ENCODE measurements at regions of chr3 and their contacts with region 1.

Region 1: DNA sequence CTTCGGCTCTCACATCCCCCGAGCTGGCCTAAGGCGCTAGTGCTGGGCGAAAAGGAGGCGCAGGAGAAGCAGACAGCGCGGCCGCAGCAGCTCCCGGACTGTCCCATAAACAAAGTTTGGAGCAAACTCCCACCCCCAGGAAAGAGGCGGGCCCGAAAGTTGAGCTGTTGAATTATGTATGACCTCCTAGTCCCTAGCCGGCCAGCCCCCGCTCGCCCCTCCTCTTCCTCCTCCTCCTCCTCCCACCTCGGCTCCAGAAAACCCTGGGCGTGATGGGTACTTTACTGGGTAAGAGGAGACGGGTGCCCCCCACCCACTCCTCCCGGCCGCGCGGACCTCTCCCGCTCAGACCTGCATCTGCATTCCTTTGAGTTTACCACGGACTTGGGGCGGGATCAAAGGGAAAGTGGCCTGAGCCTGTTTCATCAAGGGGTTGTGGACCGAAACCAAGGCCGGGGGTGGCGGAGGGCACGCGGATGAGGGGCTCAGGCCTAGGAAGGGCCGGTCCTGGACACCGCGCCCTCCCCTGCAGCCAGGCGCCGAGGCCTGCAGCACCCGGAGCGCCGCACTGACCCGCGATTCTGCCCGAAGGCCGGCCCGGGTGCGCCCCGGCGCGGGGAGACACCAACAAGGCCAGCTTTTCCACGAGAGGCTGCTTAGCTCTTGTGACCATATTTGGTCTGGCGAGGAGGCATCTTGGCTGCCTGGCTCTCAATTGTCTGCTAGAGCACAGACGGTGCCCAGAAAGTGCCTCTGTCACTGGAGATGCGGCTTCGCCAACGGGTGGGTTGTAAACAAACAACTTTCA is at the start of gene WWTR1:
- DNase-seq: peak; percentile 53 to 96 (median 68)

Region 2: DNA sequence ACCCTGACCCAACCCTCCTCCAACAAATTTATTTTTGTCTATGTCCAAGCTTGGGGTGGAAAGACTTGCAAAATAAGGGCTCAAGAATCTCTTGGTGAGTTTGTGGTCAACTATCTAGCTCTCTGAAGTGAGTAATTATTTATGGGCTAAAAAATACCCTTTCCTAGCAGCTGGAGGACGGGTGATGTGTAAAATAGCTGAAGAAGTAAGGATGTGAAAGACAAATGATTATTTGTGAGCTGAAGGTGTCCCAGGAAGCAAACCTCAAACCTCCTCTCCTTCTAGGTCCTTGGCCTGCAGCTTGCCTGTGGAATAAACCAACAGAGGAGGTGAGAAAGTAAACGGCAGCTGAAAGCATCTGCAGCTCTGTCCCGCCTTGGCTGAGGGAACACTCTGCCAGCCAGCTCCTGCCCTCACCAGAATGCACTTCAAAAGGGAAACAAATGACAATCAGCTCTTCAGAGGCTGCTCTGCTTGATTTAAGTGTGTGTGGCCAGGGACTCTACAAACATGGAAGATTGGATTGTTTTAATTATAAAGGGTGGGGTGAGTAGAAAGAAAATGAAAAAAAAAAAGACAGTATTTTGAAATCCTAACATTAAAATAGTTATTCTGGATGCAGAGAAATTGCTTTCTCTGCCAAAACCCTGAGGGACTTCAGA is 123.3 kb before region 1 on chr3:
- intact Hi-C with region 1: loop called (anchors 5 kb)
- DNase-seq: peak in 6 of 10 donors; percentile 15 to 86 (median 38)

Measured in posterior cingulate gyrus (tissue), 11 donors.